GM10248 (cell line): ENCODE measurements at regions of chr9 and their contacts with region 1.

Region 1: GRCh38 chr9:26710008-26710407 is 182.6 kb downstream of the CAAP1 start:
- DNase-seq: no peak
- CTCF ChIP-seq: no peak

Region 2: GRCh38 chr9:26677965-26678706 is 31.9 kb before region 1 on chr9:
- CTCF ChIA-PET with region 1: no interaction called
- POLR2A ChIA-PET with region 1: no interaction called
- DNase-seq: no peak
- CTCF ChIP-seq: no peak

Region 3: GRCh38 chr9:26723486-26723885 is 13.5 kb after region 1 on chr9:
- CTCF ChIA-PET with region 1: interaction called, 10 read pairs
- POLR2A ChIA-PET with region 1: no interaction called
- DNase-seq: peak; percentile 24
- CTCF ChIP-seq: peak; percentile 38

Region 4: DNA sequence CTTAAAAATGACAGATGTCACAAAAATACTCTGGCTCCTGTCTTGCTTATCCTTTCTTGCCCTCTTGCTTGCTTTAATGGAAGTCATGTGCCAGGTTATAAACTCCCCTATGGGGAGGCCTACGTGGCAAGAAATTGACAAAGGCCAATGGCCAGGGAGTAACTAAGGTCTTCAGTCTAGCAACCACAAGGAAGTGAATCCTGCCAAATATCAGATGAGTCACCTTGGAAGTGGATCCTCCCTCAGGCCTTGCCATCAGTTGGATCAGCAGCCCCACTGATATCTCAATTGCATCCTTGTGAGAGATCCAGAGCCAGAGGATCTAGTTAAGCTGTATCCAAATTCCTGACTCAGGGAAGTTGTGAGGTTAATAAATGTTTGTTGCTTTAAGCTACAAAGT is 99.8 kb after region 1 on chr9:
- CTCF ChIA-PET with region 1: no interaction called
- POLR2A ChIA-PET with region 1: no interaction called
- DNase-seq: no peak
- CTCF ChIP-seq: no peak